CD8-positive, alpha-beta T cell (primary cell): ENCODE measurements at regions of chr5 and their contacts with region 1.

Region 1: GRCh38 chr5:148179234-148179824 is 11.0 kb downstream of the SPINK14 start:
- DNase-seq: peak in 3 of 9 experiments; percentile 5 to 64 (median 51)
- ATAC-seq: no peak
- H3K4me3 ChIP-seq: no peak overlapping the region
- H3K4me3 Mint-ChIP-seq: no peak overlapping the region
- H3K27ac ChIP-seq: no peak overlapping the region
- H3K27ac Mint-ChIP-seq: no peak overlapping the region
- H3K4me1 ChIP-seq: no peaks in the 10 kb centered on the region
- H3K4me1 Mint-ChIP-seq: no peaks in the 10 kb centered on the region
- H3K27me3 ChIP-seq: no peaks in the 10 kb centered on the region
- H3K27me3 Mint-ChIP-seq: peaks cover 12% of the 10 kb centered on the region
- CTCF ChIP-seq: peak; percentile 62

Region 2: DNA sequence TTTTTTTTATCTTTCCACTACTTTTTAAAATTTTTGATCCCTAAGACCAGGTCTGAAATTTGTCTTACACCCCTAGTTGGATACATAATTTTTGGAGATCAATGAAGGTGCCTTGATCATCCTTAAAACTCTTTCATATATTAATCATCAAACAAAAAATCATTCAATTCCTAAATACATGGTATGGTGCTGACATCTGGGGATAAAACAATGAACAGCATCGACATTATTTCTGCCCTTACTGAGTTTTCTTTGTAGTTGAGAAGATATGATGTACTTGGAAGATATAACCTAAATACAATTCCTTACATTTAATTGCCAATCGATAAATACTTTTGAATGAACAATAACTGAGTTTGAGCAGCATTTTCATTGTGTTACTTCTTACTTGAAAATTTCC is 174.3 kb after region 1 on chr5:
- CTCF ChIA-PET with region 1: no interaction called
- POLR2A ChIA-PET with region 1: no interaction called
- intact Hi-C with region 1: loop called (anchors 1 to 5 kb)
- DNase-seq: no peak
- ATAC-seq: no peak
- H3K4me3 ChIP-seq: no peak overlapping the region
- H3K4me3 Mint-ChIP-seq: no peak overlapping the region
- H3K27ac ChIP-seq: no peak overlapping the region
- H3K27ac Mint-ChIP-seq: no peak overlapping the region
- H3K4me1 ChIP-seq: no peaks in the 10 kb centered on the region
- H3K4me1 Mint-ChIP-seq: no peaks in the 10 kb centered on the region
- H3K27me3 ChIP-seq: no peaks in the 10 kb centered on the region
- H3K27me3 Mint-ChIP-seq: no peaks in the 10 kb centered on the region
- CTCF ChIP-seq: no peak

Region 3: DNA sequence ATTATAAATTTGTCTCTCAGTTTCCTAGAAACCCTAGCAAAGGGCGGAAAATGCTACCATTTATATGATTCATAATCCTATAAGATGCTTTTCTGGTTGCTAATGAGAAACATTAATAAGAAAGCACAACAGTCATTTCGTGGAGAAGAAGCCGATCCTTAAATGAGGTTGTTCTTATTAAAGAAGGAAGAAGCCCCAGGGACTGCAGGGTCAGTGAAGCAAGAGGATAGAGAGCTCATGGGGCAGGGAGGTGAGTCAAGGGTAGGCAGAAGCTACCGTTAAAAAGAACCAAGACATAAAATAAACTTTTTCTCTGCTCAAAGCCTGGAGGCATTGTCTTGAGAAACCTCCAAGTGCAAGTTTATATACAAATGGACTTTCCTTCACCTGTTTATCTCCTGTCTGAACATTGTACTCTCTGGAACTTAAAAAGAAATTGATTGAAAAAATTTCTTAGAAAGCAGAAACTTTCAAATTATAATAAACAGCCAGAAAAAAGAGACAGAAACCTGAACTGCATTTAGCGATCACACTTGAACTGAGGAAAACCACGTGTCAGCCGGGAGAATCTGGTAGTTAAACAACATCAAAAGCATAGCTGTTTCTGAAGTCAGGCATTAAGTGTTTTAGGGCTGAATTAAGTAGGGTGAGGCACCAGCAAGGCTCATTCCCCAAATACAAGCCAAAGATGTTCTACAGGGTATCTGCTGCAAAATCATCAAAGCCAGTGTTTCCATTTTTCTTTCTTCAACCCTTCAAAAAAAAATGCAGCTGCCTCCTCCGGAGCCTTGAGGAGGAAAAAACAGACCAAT is 453.1 kb after region 1 on chr5:
- CTCF ChIA-PET with region 1: no interaction called
- POLR2A ChIA-PET with region 1: no interaction called
- intact Hi-C with region 1: no loop called
- DNase-seq: peak in 1 of 9 experiments; percentile 11
- ATAC-seq: no peak
- H3K4me3 ChIP-seq: no peak overlapping the region
- H3K4me3 Mint-ChIP-seq: no peak overlapping the region
- H3K27ac ChIP-seq: no peak overlapping the region
- H3K27ac Mint-ChIP-seq: no peak overlapping the region
- H3K4me1 ChIP-seq: no peaks in the 10 kb centered on the region
- H3K4me1 Mint-ChIP-seq: peaks cover 7% of the 10 kb centered on the region
- H3K27me3 ChIP-seq: no peaks in the 10 kb centered on the region
- H3K27me3 Mint-ChIP-seq: peaks cover 2% of the 10 kb centered on the region
- CTCF ChIP-seq: no peak